T-cell (primary cell): ENCODE measurements at regions of chr1 and their contacts with region 1.

Region 1: GRCh38 chr1:19240673-19241538 is 10.4 kb downstream of the EMC1 start:
- DNase-seq: peak; percentile 24 to 78 (median 59)
- ATAC-seq: peak; percentile 84 to 91 (median 86)
- H3K4me3 ChIP-seq: no peak overlapping the region
- H3K4me3 Mint-ChIP-seq: no peak overlapping the region
- H3K27ac ChIP-seq: no peak overlapping the region
- H3K27ac Mint-ChIP-seq: no peak overlapping the region
- H3K4me1 ChIP-seq: peaks cover 0 to 3% of the 10 kb centered on the region in 2 experiments
- H3K4me1 Mint-ChIP-seq: peaks cover 0 to 2% (median 0%) of the 10 kb centered on the region in 3 donors
- H3K27me3 ChIP-seq: no peaks in the 10 kb centered on the region
- H3K27me3 Mint-ChIP-seq: no peaks in the 10 kb centered on the region

Region 2: GRCh38 chr1:19179597-19180264 is 61.2 kb before region 1 on chr1:
- CTCF ChIA-PET with region 1: interaction called, 3 to 11 read pairs
- POLR2A ChIA-PET with region 1: interaction called in 1 of 2 experiments, 3 read pairs
- DNase-seq: peak in 32 of 35 experiments; percentile 3 to 57 (median 28)
- ATAC-seq: peak; percentile 73 to 98 (median 94)
- H3K4me3 ChIP-seq: no peak overlapping the region
- H3K4me3 Mint-ChIP-seq: peak overlapping the region in 1 of 3 donors; percentile 24
- H3K27ac ChIP-seq: peak overlapping the region; percentile 41
- H3K27ac Mint-ChIP-seq: peak overlapping the region; percentile 84 to 90
- H3K4me1 ChIP-seq: peaks cover 9 to 10% of the 10 kb centered on the region in 2 experiments
- H3K4me1 Mint-ChIP-seq: peaks cover 27 to 28% (median 27%) of the 10 kb centered on the region in 3 donors
- H3K27me3 ChIP-seq: no peaks in the 10 kb centered on the region
- H3K27me3 Mint-ChIP-seq: no peaks in the 10 kb centered on the region